Right ventricle myocardium inferior (tissue), 1 donor: ENCODE measurements at regions of chr20 and their contacts with region 1.

Region 1: DNA sequence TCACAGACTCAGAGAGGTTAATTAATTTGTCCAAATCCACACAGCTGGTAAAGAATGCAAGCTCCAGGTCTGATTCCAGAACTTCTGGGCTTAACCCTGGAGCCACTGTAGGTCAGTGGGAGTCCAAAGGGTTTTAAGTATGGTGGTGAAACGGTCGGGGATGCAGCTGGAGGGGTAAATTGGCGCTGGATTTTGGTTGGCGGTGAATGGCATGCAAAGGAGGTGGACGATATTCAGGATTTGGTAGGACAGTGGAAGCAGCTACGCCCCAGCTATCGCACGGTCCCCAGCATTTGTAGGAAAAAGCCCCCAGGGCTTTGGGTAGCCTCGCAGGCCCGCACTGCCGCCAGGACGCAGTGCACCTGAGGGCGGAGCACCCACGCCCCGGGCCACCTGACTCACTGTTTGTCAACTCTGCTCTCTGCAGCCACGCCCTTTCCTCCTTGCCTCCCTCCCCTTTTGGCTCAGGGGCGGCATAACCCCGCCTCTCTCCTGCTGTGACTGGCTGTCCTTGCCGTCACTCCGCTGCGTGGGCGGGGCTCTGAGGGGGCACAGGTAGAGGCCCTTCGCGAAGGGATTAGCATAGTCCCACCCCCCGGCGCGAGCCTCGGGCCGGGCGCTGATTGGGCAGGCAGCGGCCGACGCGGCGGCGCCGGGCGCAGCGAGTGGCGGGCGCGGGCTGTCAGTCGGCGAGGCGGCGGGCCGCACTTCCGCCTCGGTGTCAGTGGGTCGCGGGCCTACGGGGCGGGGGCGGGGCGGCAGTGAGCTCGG is at the start of gene OSBPL2:
- DNase-seq: peak; percentile 99
- ATAC-seq: peak; percentile 98
- total RNA-seq, gene OSBPL2: 59.5 TPM

Region 2: DNA sequence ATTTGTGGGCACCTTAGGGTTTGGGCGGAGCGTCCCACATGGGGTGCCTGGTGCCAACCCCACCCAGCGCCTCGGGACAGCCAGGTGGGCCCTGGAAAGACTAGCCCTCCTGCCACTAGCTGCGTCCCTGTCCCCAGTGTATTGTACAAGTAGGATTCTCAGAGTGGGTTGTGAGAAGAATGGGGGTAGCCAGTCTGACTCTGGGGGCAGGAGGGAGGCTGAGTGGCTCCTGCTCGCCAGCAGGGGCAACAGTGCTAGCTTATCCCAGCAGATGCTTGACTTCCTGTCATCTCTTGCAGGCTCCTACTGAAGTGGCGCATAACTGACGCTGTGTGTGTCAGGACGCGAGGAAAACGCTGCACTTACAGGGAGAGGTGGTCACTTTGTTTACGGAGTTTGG is 104.1 kb before region 1 on chr20:
- intact Hi-C with region 1: no loop called
- DNase-seq: peak; percentile 63
- ATAC-seq: peak; percentile 59

Region 3: DNA sequence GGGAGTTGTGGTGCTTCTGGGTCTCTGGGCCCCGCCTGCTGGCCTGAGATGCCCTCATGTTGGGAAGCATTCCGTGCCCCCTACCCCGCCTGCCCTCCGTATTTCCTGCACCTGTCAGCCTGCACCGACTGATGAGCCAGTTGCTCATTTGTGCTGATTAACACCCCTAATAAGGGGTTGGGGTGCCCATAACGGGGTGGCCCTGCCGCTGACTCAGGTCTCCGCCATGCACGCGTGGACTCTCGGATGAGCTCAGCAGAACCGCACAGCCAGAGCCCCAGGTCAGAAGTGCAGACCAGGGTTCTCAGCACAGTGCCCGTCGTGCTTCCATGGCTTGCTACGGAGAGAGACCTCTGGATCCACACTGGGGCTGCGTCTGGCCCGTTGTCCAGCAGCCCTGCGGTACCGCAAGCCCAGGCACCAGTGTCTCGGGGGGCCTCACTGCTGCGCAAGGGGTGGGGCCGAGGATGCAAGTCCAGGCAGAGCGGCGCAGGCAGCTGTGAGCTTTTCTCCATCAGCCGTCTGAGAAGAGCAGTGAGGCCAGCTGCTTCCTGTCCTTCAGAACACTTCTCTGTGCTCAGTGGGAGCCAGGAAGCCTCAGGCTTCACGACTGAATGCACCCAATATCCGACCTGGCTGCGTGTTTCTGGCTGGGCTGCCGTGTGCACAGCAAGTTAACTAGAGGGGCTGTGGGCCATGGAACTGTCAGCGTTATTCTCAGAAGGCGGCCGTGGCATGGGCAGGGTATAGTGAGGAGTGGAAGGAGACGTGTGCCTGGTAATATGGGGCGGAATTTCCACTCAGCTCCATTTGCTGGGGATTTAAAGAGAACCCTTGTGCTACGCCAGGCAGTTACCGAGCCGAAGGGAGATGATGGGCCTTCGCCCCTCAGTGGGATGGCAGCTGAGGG is 36.6 kb before region 1 on chr20:
- intact Hi-C with region 1: no loop called
- DNase-seq: peak; percentile 39
- ATAC-seq: no peak

Region 4: GRCh38 chr20:62282877-62283503 is 45.0 kb after region 1 on chr20:
- intact Hi-C with region 1: loop called (anchors 5 kb)
- DNase-seq: no peak
- ATAC-seq: peak; percentile 82